Activated CD8-positive, alpha-beta T cell treated with anti-CD3 and anti-CD28 coated beads for 36 hours (primary cell): ENCODE measurements at regions of chr17 and their contacts with region 1.

Region 1: DNA sequence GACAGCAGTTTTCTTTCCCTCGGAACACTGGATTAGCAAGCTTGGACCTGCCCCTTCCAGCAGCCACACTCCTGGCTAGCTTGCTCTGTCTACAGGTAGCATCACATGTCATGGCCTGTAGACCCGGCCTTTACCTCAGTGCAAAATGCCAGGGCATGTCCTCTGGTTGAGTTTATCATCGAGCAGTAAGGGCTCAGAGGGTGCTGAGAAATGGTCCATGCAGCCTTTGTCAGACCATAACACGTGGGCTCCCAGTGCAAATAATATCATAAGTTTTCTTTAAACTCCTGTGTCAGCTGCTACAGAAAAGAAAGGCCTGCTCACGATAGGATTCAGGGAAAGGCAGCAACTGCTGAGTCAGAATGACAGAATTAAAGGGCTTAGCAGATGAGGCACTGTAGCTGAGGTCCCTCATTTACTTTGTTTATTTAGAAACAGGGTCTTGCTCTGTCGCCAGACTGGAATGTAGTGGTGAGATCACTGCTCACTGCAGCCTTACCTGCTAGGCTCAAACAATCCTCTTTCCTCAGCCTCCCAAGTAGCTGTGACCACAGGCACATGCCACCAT is 8.0 kb upstream of the GNA13 start:
- DNase-seq: no peak
- ATAC-seq: no peak
- H3K4me3 Mint-ChIP-seq: no peak overlapping the region
- H3K27ac Mint-ChIP-seq: no peak overlapping the region
- H3K4me1 Mint-ChIP-seq: peaks cover 2% of the 10 kb centered on the region
- H3K27me3 Mint-ChIP-seq: no peaks in the 10 kb centered on the region
- CTCF ChIP-seq: no peak

Region 2: GRCh38 chr17:65074778-65075250 is 10.3 kb after region 1 on chr17:
- CTCF ChIA-PET with region 1: interaction called, 12 read pairs
- POLR2A ChIA-PET with region 1: interaction called, 3 read pairs
- intact Hi-C with region 1: no loop called
- DNase-seq: no peak
- ATAC-seq: no peak
- H3K4me3 Mint-ChIP-seq: no peak overlapping the region
- H3K27ac Mint-ChIP-seq: no peak overlapping the region
- H3K4me1 Mint-ChIP-seq: no peaks in the 10 kb centered on the region
- H3K27me3 Mint-ChIP-seq: no peaks in the 10 kb centered on the region
- CTCF ChIP-seq: no peak

Region 3: GRCh38 chr17:65131946-65132366 is 67.4 kb after region 1 on chr17:
- CTCF ChIA-PET with region 1: no interaction called
- POLR2A ChIA-PET with region 1: no interaction called
- intact Hi-C with region 1: no loop called
- DNase-seq: no peak
- ATAC-seq: no peak
- H3K4me3 Mint-ChIP-seq: no peak overlapping the region
- H3K27ac Mint-ChIP-seq: no peak overlapping the region
- H3K4me1 Mint-ChIP-seq: peaks cover 6% of the 10 kb centered on the region
- H3K27me3 Mint-ChIP-seq: peaks cover 20% of the 10 kb centered on the region
- CTCF ChIP-seq: no peak